H1 (cell line): ENCODE measurements at regions of chr11 and their contacts with region 1.

Region 1: GRCh38 chr11:120057595-120058581 is 80.0 kb downstream of the TRIM29 start:
- DNase-seq: peak; percentile 47 to 62
- H3K4me3 ChIP-seq: peak overlapping the region in 3 of 4 experiments; percentile 8 to 40 (median 20); a peak in 3 of 8 replicates
- H3K27ac ChIP-seq: peak overlapping the region; percentile 81
- H3K4me1 ChIP-seq: peaks cover 17 to 43% (median 22%) of the 10 kb centered on the region in 4 experiments
- H3K27me3 ChIP-seq: no peaks in the 10 kb centered on the region; a peak in 2 of 7 replicates
- CTCF ChIP-seq: no peak
- EP300 ChIP-seq: peak in 1 of 2 experiments; percentile 69; a peak in 1 of 3 replicates
- POLR2A ChIP-seq: peak in 1 of 2 experiments; percentile 50; a peak in 2 of 3 replicates
- RAD21 ChIP-seq: no peak; a peak in 1 of 4 replicates

Region 2: GRCh38 chr11:120034881-120035630 is 22.8 kb before region 1 on chr11:
- CTCF ChIA-PET with region 1: interaction called, 7 read pairs
- POLR2A ChIA-PET with region 1: interaction called, 10 read pairs
- DNase-seq: peak in 1 of 2 experiments; percentile 41
- H3K4me3 ChIP-seq: no peak overlapping the region
- H3K27ac ChIP-seq: no peak overlapping the region
- H3K4me1 ChIP-seq: peaks cover 0 to 9% (median 4%) of the 10 kb centered on the region in 4 experiments; a peak in 5 of 7 replicates
- H3K27me3 ChIP-seq: no peaks in the 10 kb centered on the region
- CTCF ChIP-seq: no peak
- EP300 ChIP-seq: no peak
- POLR2A ChIP-seq: no peak
- RAD21 ChIP-seq: no peak

Region 3: GRCh38 chr11:120074076-120074475 is 16.2 kb after region 1 on chr11:
- CTCF ChIA-PET with region 1: interaction called, 17 read pairs
- POLR2A ChIA-PET with region 1: interaction called, 4 read pairs
- DNase-seq: no peak
- H3K4me3 ChIP-seq: no peak overlapping the region
- H3K27ac ChIP-seq: no peak overlapping the region
- H3K4me1 ChIP-seq: peaks cover 0 to 5% (median 0%) of the 10 kb centered on the region in 4 experiments; a peak in 2 of 7 replicates
- H3K27me3 ChIP-seq: no peaks in the 10 kb centered on the region
- CTCF ChIP-seq: no peak
- EP300 ChIP-seq: no peak
- POLR2A ChIP-seq: no peak
- RAD21 ChIP-seq: no peak